Gastrocnemius medialis (tissue), 4 donors: ENCODE measurements at regions of chr2 and their contacts with region 1.

Region 1: GRCh38 chr2:207632575-207633493 is 7.6 kb upstream of the METTL21A start:
- DNase-seq: no peak
- ATAC-seq: peak in 1 of 2 donors; percentile 69
- H3K4me3 ChIP-seq: no peak overlapping the region
- H3K27ac ChIP-seq: no peak overlapping the region
- H3K4me1 ChIP-seq: no peaks in the 10 kb centered on the region
- H3K27me3 ChIP-seq: no peaks in the 10 kb centered on the region
- CTCF ChIP-seq: no peak
- POLR2A ChIP-seq: no peak

Region 2: GRCh38 chr2:207710814-207711740 is 78.2 kb after region 1 on chr2 and contains the start of gene CCNYL1:
- in situ Hi-C with region 1: loop called in 2 of 4 experiments (anchors 10 kb)
- intact Hi-C with region 1: no loop called
- DNase-seq: peak; percentile 99
- ATAC-seq: peak; percentile 96 to 97
- H3K4me3 ChIP-seq: peak within 1 kb of the TSS; percentile 79 to 95 (median 89)
- H3K27ac ChIP-seq: peak within 1 kb of the TSS; percentile 76 to 88 (median 80)
- H3K4me1 ChIP-seq: peaks cover 18 to 19% of the 10 kb centered on the region in 2 donors
- H3K27me3 ChIP-seq: no peaks in the 10 kb centered on the region
- CTCF ChIP-seq: peak in 4 of 5 experiments; percentile 26 to 52 (median 45)
- POLR2A ChIP-seq: peak; percentile 87 to 98
- total RNA-seq, gene CCNYL1: 3.3 to 10.1 (median 7.1) TPM